ENCODE measurements at regions of chr7 and their contacts with region 1.

Region 1: DNA sequence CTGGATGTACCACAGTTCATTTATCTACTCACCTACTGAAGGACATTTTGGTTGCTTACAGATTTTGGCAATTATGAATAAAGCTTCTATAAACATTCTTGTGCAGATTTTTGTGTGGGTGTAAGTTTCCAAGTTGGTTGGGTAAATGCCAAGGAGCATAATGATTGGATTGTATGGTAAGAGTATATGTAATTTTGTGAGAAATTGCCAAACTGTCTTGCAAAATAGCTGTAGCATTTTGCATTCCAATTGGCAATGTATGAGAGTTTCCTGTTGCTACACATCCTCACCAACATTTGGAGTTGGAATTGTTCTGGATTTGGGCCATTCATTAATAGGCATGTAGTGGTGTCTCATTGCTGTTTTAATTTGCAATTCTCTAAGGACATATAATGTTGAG is 33.9 kb upstream of the HYAL4 start:
- DNase-seq: no peak
- H3K4me3 ChIP-seq: no peak overlapping the region
- H3K27ac ChIP-seq: no peak overlapping the region
- H3K4me1 ChIP-seq: no peaks in the 10 kb centered on the region
- H3K27me3 ChIP-seq: no peaks in the 10 kb centered on the region
- CTCF ChIP-seq: no peak
- POLR2A ChIP-seq: no peak

Region 2: DNA sequence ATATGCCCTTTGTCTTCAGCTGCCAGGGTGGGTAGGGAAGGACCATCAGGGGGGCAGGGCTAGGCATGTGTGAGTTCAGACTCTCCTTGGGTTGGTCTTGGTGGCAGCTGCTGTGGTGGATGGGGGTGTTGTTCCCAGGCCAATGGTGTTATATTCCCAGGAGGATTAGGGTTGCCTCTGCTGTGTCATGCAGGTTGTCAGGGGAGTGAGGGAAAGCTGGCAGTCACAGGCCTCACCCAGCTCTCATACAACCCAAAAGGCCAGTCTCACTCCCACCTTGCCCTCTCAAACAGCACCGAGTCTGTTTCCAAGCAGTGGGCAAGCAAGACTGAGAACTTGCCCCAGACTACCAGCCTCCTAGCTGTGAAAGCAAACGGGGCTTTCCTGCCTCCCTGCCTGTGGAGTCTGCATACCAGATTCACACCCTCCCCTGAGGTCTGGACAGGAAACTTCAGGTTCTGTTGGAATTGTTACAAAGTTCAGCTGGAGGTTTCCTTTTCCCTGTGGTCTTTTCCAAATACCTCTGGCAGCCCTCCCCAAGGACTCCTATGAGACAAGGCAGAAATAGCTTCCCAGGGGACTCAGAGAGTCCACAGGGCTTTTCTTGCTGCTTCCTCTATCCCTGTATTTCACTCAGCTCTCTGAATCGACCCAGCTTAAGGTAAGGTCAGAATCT is 35.3 kb after region 1 on chr7:
- CTCF ChIA-PET with region 1: no interaction called
- POLR2A ChIA-PET with region 1: no interaction called
- dilution Hi-C with region 1: no loop called
- intact Hi-C with region 1: loop called (anchors 5 kb)
- DNase-seq: peak; percentile 40
- H3K4me3 ChIP-seq: no peak overlapping the region
- H3K27ac ChIP-seq: no peak overlapping the region
- H3K4me1 ChIP-seq: no peaks in the 10 kb centered on the region
- H3K27me3 ChIP-seq: no peaks in the 10 kb centered on the region
- CTCF ChIP-seq: no peak
- POLR2A ChIP-seq: no peak

Region 3: DNA sequence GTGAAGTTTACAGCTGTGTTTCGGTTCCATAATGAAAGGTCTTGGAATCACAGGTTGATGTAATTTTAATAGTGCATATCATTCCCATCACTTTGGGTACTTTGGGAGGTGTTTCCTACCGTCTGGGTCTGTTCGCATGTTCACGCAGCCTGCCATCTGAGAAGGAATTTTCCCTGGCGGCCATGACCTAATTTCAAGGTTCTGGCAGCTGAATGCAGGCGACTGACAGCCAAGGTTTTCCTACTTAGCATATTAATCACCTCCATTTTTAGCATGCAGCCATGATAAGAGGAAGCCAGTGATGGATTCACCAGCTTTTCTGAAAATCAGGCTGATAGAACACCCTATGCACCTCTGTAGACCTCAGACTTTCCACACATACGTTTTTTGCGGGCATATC is 540.9 kb after region 1 on chr7:
- CTCF ChIA-PET with region 1: no interaction called
- POLR2A ChIA-PET with region 1: no interaction called
- dilution Hi-C with region 1: no loop called
- intact Hi-C with region 1: no loop called
- DNase-seq: no peak
- H3K4me3 ChIP-seq: no peak overlapping the region
- H3K27ac ChIP-seq: no peak overlapping the region
- H3K4me1 ChIP-seq: no peaks in the 10 kb centered on the region
- H3K27me3 ChIP-seq: no peaks in the 10 kb centered on the region
- CTCF ChIP-seq: no peak
- POLR2A ChIP-seq: no peak